ENCODE measurements at regions of chr16 and their contacts with region 1.

Region 1: GRCh38 chr16:11396241-11397048 is 51.2 kb downstream of the RMI2 start:
- DNase-seq: peak; percentile 76 to 91
- ATAC-seq: peak; percentile 86
- H3K4me3 ChIP-seq: no peak overlapping the region
- H3K27ac ChIP-seq: no peak overlapping the region
- H3K4me1 ChIP-seq: no peaks in the 10 kb centered on the region
- H3K27me3 ChIP-seq: no peaks in the 10 kb centered on the region

Region 2: GRCh38 chr16:10918294-10919002 is 478.0 kb before region 1 on chr16:
- intact Hi-C with region 1: no loop called
- DNase-seq: peak; percentile 96 to 97
- ATAC-seq: peak; percentile 94
- H3K4me3 ChIP-seq: no peak overlapping the region
- H3K27ac ChIP-seq: no peak overlapping the region
- H3K4me1 ChIP-seq: no peaks in the 10 kb centered on the region
- H3K27me3 ChIP-seq: no peaks in the 10 kb centered on the region

Region 3: GRCh38 chr16:10965440-10966061 is 430.9 kb before region 1 on chr16:
- intact Hi-C with region 1: loop called in 1 of 2 experiments (anchors 5 kb)
- DNase-seq: no peak
- ATAC-seq: no peak
- H3K4me3 ChIP-seq: no peak overlapping the region
- H3K27ac ChIP-seq: no peak overlapping the region
- H3K4me1 ChIP-seq: no peaks in the 10 kb centered on the region
- H3K27me3 ChIP-seq: no peaks in the 10 kb centered on the region

Region 4: GRCh38 chr16:11105038-11105903 is 291.2 kb before region 1 on chr16:
- intact Hi-C with region 1: no loop called
- DNase-seq: no peak
- ATAC-seq: peak; percentile 83
- H3K4me3 ChIP-seq: no peak overlapping the region
- H3K27ac ChIP-seq: peak overlapping the region in 1 of 2 donors; percentile 28
- H3K4me1 ChIP-seq: peaks cover 9 to 11% of the 10 kb centered on the region in 2 donors
- H3K27me3 ChIP-seq: no peaks in the 10 kb centered on the region

Region 5: DNA sequence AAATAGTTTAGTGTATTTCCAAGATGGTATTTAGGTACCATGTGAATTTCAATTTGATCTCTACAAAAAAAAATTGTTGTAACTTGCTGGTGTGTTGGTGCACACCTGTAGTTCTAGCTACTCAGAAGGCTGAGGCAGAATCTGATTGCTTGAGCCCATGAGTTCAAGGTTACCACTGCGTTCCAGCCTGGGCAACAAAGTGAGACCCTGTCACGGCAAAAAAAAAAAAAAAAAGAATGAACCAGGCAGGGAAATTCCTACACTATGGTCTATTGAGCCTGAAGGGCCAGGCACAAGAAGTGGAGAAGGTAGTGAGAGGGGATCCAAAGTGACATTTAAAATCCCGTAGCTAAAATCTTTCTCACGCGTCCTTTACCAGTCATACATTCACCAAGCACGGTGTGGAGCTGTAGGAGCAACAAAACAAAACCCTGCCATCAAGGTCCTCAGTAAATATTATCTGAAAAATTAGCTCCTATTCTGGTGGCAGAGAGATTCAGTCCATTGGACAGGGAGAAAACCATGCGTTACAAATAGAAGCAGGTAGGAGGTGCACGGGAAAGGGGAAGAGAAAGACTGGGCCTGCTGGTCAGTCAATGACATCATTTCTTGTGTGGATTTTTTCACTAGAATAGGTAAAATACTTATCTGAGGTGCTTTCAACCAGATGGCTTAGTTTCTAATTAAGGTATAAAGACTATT is 319.0 kb after region 1 on chr16:
- intact Hi-C with region 1: loop called (anchors 2 to 5 kb)
- DNase-seq: no peak
- ATAC-seq: no peak
- H3K4me3 ChIP-seq: no peak overlapping the region
- H3K27ac ChIP-seq: no peak overlapping the region
- H3K4me1 ChIP-seq: no peaks in the 10 kb centered on the region
- H3K27me3 ChIP-seq: no peaks in the 10 kb centered on the region

Region 6: GRCh38 chr16:11806721-11807120 is 410.3 kb after region 1 on chr16:
- intact Hi-C with region 1: loop called (anchors 5 to 10 kb)
- DNase-seq: no peak
- ATAC-seq: no peak
- H3K4me3 ChIP-seq: no peak overlapping the region
- H3K27ac ChIP-seq: no peak overlapping the region
- H3K4me1 ChIP-seq: no peaks in the 10 kb centered on the region
- H3K27me3 ChIP-seq: no peaks in the 10 kb centered on the region

Region 7: GRCh38 chr16:11819798-11820197 is 423.4 kb after region 1 on chr16:
- intact Hi-C with region 1: loop called (anchors 5 to 10 kb)
- DNase-seq: no peak
- ATAC-seq: no peak
- H3K4me3 ChIP-seq: no peak overlapping the region
- H3K27ac ChIP-seq: no peak overlapping the region
- H3K4me1 ChIP-seq: no peaks in the 10 kb centered on the region
- H3K27me3 ChIP-seq: no peaks in the 10 kb centered on the region